K562 (cell line): ENCODE measurements at regions of chr12 and their contacts with region 1.

Region 1: GRCh38 chr12:52362118-52362726 is 5.1 kb downstream of the KRT85 start:
- DNase-seq: peak in 3 of 4 experiments; percentile 23 to 38 (median 31)
- ATAC-seq: peak; percentile 68
- H3K4me3 ChIP-seq: no peak overlapping the region
- H3K27ac ChIP-seq: no peak overlapping the region
- H3K4me1 ChIP-seq: no peaks in the 10 kb centered on the region
- H3K27me3 ChIP-seq: peaks cover 24 to 55% of the 10 kb centered on the region in 2 experiments; a peak in 4 of 5 replicates
- CTCF ChIP-seq: peak; percentile 32 to 63 (median 50); a peak in 5 of 6 replicates
- EP300 ChIP-seq: no peak
- POLR2A ChIP-seq: no peak
- RAD21 ChIP-seq: no peak

Region 2: DNA sequence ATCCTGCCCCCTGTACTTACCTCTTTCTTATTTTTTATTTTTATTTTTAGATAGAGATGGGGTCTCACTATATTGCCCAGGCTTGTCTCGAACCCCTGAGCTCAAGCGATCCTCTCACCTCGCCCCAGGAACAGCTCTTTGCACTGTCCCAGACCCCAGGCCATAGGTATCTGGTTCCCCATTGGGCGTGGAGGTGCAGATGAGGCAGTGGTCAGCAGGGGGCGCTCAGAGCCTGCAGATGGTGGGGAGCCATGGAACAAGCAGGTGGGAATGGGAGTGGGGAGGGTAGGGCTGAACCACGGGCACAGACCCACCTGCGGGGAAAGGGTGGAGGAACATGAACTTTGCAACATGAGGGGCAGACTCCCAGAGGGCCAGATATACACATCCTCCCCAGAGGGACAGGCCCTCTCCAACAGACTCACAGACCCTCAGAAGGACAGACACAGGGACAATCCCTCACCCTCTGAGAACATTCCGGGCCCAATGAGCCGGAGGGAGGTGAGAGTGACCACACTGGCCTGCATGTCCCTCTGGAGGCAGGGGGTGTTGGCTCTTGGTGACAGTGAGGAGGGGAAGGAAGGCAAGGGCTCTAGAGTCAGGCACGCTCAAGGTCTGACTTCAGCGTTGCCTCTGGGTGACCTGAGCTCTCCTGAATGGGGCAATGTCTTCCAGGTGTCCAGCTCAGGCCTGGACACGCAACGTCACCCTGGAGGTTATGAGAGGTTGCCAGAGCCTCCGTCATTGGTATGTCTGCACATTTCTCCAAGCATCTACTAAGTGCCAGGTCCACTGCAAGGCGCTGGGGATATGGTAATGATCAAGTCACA is 205.3 kb before region 1 on chr12:
- CTCF ChIA-PET with region 1: no interaction called
- POLR2A ChIA-PET with region 1: no interaction called
- in situ Hi-C with region 1: no loop called
- intact Hi-C with region 1: loop called (anchors 10 kb)
- DNase-seq: peak; percentile 76 to 86 (median 82)
- ATAC-seq: peak; percentile 88
- H3K4me3 ChIP-seq: no peak overlapping the region
- H3K27ac ChIP-seq: no peak overlapping the region
- H3K4me1 ChIP-seq: peaks cover 0 to 6% of the 10 kb centered on the region in 2 experiments; a peak in 3 of 5 replicates
- H3K27me3 ChIP-seq: peaks cover 7 to 18% of the 10 kb centered on the region in 2 experiments; a peak in 4 of 5 replicates
- CTCF ChIP-seq: peak; percentile 90 to 96 (median 92)
- EP300 ChIP-seq: no peak
- POLR2A ChIP-seq: no peak
- RAD21 ChIP-seq: peak; percentile 81 to 90

Region 3: DNA sequence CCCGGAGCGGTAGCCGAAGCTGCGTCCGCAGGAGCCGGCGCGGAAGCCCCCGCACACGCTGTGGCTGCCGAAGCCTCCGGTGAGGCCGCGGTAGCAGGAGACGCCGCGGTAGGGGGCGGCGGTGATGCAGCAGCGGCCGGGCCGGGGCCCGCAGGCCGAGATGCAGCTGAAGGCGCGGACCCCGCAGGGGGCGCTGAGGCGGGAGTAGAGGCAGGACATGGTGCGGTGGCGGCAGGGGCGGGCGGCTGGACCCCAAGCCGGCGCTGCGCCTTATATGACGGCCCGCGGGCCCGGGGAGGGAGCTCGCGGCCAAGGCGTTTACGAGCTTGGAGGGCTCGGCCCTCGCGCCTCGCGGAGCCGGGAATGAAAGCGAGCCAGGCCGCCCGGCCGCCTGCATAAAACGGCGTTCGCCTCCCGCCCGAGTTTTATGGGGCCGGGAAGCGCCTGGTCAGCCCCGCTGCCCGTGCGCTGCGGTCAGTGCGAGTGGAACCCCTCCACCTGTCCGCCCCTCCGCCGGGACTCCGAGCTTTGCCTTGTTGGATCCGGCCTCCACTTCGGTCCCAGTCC is 103.8 kb before region 1 on chr12:
- CTCF ChIA-PET with region 1: no interaction called
- POLR2A ChIA-PET with region 1: no interaction called
- in situ Hi-C with region 1: no loop called
- intact Hi-C with region 1: no loop called
- DNase-seq: no peak
- ATAC-seq: no peak; the same call in 1 of the 3 replicates
- H3K4me3 ChIP-seq: no peak overlapping the region
- H3K27ac ChIP-seq: no peak overlapping the region
- H3K4me1 ChIP-seq: peaks cover 0 to 5% of the 10 kb centered on the region in 2 experiments; a peak in 1 of 5 replicates
- H3K27me3 ChIP-seq: peaks cover 26 to 58% of the 10 kb centered on the region in 2 experiments
- CTCF ChIP-seq: peak in 1 of 3 experiments; percentile 21; a peak in 1 of 6 replicates
- EP300 ChIP-seq: no peak
- POLR2A ChIP-seq: no peak
- RAD21 ChIP-seq: no peak